Activated CD4-positive, alpha-beta T cell treated with anti-CD3 and anti-CD28 coated beads for 36 hours (primary cell): ENCODE measurements at regions of chr6 and their contacts with region 1.

Region 1: GRCh38 chr6:109009236-109009961 is 85.2 kb downstream of the SESN1 start:
- DNase-seq: peak; percentile 95
- ATAC-seq: peak; percentile 89
- H3K4me3 Mint-ChIP-seq: peak overlapping the region; percentile 94
- H3K27ac Mint-ChIP-seq: peak overlapping the region; percentile 98
- H3K4me1 Mint-ChIP-seq: peaks cover 60% of the 10 kb centered on the region
- H3K27me3 Mint-ChIP-seq: no peaks in the 10 kb centered on the region

Region 2: DNA sequence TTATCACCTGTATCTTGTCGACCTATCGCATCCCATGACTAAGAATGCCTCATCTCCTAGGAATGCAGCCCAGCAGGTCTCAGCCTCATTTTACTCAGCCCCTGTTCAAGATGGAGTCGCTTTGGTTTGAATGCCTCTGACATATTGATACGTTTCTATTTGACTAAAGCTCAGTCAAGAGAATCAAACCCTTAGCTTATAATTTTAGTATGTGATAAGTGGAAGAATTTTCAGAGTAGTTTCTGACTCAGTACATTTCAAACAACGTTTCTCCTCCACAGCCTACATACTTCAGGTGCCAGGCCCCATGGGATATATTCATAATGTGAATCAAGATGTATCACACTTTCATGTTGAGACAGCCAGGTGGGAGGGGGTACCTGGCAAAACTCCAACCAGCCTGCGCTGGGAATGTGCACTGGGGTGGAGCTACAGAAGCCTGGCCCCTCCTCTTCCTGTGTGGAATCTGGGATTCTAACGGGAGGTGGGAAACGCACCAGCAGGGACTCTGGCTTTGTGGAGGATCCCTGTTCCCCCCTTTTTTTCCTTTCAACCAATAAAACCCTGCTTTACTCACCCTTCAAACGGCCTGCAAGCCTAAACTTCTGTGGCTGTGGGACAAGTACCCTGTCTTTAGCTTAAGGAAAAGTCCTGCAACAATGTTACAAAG is 1044.6 kb before region 1 on chr6:
- CTCF ChIA-PET with region 1: no interaction called
- POLR2A ChIA-PET with region 1: no interaction called
- intact Hi-C with region 1: loop called in 1 of 2 experiments (anchors 2 kb)
- DNase-seq: peak; percentile 90
- ATAC-seq: peak; percentile 96
- H3K4me3 Mint-ChIP-seq: no peak overlapping the region
- H3K27ac Mint-ChIP-seq: peak overlapping the region; percentile 88
- H3K4me1 Mint-ChIP-seq: peaks cover 25% of the 10 kb centered on the region
- H3K27me3 Mint-ChIP-seq: peaks cover 2% of the 10 kb centered on the region

Region 3: DNA sequence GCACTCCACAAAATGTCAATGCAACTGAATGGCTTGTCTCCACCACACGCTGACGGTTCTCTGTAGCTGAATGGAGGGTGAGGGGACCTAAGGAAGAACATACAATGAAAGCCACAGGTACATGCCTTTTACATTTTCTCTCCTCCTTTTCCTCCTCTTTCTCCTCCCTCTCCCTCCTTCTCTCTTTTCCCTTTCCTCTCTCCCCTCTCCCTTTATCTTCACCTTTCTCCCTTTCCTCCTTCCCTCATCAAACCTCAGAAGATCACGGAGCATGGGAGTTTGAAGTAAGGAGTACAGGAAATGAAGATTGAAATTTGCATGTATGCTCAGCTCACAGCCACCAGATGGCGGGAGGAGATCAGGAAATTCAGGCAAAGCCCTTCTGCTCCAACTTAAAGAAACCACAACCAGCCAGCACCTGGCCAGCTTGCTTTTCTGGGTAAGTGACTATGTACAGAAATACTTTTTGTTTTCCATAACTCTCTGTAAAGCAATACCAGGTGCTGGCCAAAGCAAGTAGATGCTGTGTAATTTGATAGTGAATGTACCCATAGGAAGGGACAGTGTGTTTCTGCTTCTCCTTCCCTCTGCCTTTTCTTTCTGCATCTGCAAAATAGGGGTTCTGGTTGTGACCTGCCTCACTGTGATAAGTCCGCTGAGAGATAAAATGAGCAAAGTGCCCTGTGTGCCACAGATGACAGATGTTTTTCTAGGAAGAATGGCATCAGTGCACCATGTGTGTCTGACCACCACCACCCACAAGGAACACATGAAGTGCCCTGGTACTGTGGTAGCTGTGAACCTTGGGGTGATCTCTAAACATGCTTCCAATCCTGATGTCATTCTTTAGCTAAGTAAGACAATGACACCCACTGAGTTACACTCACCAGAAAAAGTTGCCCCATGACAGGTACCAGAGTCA is 467.3 kb before region 1 on chr6:
- CTCF ChIA-PET with region 1: no interaction called
- POLR2A ChIA-PET with region 1: no interaction called
- intact Hi-C with region 1: loop called in 1 of 2 experiments (anchors 5 kb)
- DNase-seq: peak; percentile 81
- ATAC-seq: peak; percentile 79
- H3K4me3 Mint-ChIP-seq: no peak overlapping the region
- H3K27ac Mint-ChIP-seq: no peak overlapping the region
- H3K4me1 Mint-ChIP-seq: peaks cover 7% of the 10 kb centered on the region
- H3K27me3 Mint-ChIP-seq: no peaks in the 10 kb centered on the region

Region 4: GRCh38 chr6:108883172-108883571 is 126.2 kb before region 1 on chr6:
- CTCF ChIA-PET with region 1: interaction called, 3 read pairs
- POLR2A ChIA-PET with region 1: no interaction called
- intact Hi-C with region 1: loop called in 1 of 2 experiments (anchors 1 kb)
- DNase-seq: no peak
- ATAC-seq: peak; percentile 93
- H3K4me3 Mint-ChIP-seq: no peak overlapping the region
- H3K27ac Mint-ChIP-seq: peak overlapping the region; percentile 60
- H3K4me1 Mint-ChIP-seq: peaks cover 34% of the 10 kb centered on the region
- H3K27me3 Mint-ChIP-seq: peaks cover 16% of the 10 kb centered on the region

Region 5: DNA sequence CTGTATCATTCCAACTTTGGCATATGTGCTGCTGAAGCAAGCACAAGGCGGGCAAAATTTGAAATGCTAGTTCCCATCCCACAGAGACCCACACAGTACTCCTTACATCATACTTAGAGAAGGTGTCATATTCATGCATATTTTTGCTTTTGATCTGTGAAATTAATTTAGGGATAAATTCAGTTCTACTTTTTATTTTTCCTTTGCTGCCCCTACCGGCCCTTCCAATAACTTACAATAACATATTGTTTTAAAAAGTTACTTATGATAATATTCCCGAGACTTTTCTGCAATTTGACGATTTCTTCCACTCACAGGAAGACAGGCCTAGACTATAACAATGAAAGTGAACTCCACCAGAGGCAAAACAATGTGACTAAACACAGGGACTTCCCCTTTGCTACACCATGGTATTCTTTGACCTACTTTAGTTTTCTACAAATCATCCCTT is 50.2 kb after region 1 on chr6:
- CTCF ChIA-PET with region 1: interaction called, 3 read pairs
- POLR2A ChIA-PET with region 1: no interaction called
- intact Hi-C with region 1: loop called in 1 of 2 experiments (anchors 2 kb)
- DNase-seq: no peak
- ATAC-seq: peak; percentile 100
- H3K4me3 Mint-ChIP-seq: peak overlapping the region; percentile 51
- H3K27ac Mint-ChIP-seq: peak overlapping the region; percentile 89
- H3K4me1 Mint-ChIP-seq: peaks cover 47% of the 10 kb centered on the region
- H3K27me3 Mint-ChIP-seq: no peaks in the 10 kb centered on the region

Region 6: GRCh38 chr6:109373762-109374161 is 364.4 kb after region 1 on chr6:
- CTCF ChIA-PET with region 1: interaction called, 3 read pairs
- POLR2A ChIA-PET with region 1: interaction called, 5 read pairs
- intact Hi-C with region 1: loop called in 1 of 2 experiments (anchors 2 kb)
- DNase-seq: peak; percentile 77
- ATAC-seq: peak; percentile 95
- H3K4me3 Mint-ChIP-seq: peak overlapping the region; percentile 68
- H3K27ac Mint-ChIP-seq: peak overlapping the region; percentile 98
- H3K4me1 Mint-ChIP-seq: peaks cover 77% of the 10 kb centered on the region
- H3K27me3 Mint-ChIP-seq: no peaks in the 10 kb centered on the region